ENCODE measurements at regions of chr5 and their contacts with region 1.

Region 1: GRCh38 chr5:176647030-176647866 is at the start of gene TSPAN17:
- DNase-seq: peak; percentile 91 to 100 (median 98)
- ATAC-seq: peak; percentile 90
- H3K4me3 ChIP-seq: peak within 1 kb of the TSS; percentile 71
- H3K4me3 Mint-ChIP-seq: peak within 1 kb of the TSS; percentile 93
- H3K27ac ChIP-seq: peak within 1 kb of the TSS; percentile 65 to 70
- H3K27ac Mint-ChIP-seq: peak within 1 kb of the TSS; percentile 76
- H3K4me1 ChIP-seq: peaks cover 52% of the 10 kb centered on the region
- H3K4me1 Mint-ChIP-seq: peaks cover 58% of the 10 kb centered on the region
- H3K27me3 ChIP-seq: no peaks in the 10 kb centered on the region
- H3K27me3 Mint-ChIP-seq: no peaks in the 10 kb centered on the region
- CTCF ChIP-seq: no peak
- total RNA-seq, gene TSPAN17: 7.8 to 7.9 TPM

Region 2: GRCh38 chr5:175814691-175815090 is 832.6 kb before region 1 on chr5:
- CTCF ChIA-PET with region 1: no interaction called
- POLR2A ChIA-PET with region 1: no interaction called
- intact Hi-C with region 1: no loop called
- DNase-seq: no peak
- ATAC-seq: no peak
- H3K4me3 ChIP-seq: no peak overlapping the region
- H3K4me3 Mint-ChIP-seq: no peak overlapping the region
- H3K27ac ChIP-seq: no peak overlapping the region
- H3K27ac Mint-ChIP-seq: no peak overlapping the region
- H3K4me1 ChIP-seq: no peaks in the 10 kb centered on the region
- H3K4me1 Mint-ChIP-seq: no peaks in the 10 kb centered on the region
- H3K27me3 ChIP-seq: peaks cover 0 to 2% of the 10 kb centered on the region in 2 experiments
- H3K27me3 Mint-ChIP-seq: peaks cover 27% of the 10 kb centered on the region
- CTCF ChIP-seq: no peak

Region 3: DNA sequence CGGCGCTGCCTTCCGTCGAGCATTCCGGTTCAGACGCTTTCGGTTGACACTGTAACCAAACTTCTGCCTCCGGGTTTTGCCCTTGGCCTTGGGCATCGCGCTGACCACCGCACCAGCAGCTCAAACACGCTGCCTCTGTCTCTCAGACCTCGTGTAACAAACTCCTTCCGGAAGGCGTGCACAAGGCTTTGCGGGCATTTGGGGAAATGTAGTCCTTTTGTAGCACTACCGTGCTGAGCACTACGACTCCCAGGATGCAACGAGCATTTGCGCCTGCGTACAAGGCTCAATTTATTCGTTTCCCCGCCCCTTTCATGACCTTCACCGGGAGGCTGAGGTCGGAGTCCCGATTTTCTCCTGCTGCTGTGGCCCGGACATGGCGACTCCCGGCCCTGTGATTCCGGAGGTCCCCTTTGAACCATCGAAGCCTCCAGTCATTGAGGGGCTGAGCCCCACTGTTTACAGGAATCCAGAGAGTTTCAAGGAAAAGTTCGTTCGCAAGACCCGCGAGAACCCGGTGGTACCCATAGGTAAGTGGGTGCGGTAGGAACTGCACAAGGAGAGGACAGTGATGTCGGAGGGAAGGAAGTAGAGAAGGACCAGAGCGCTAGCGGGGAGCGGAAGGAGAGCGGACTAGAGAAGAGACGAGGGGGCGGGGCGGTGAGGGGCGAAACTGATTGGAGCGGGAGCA is 258.7 kb before region 1 on chr5 and contains the starts of genes HIGD2A and NOP16:
- CTCF ChIA-PET with region 1: no interaction called
- POLR2A ChIA-PET with region 1: interaction called, 7 read pairs
- intact Hi-C with region 1: loop called in 1 of 2 experiments (anchors 2 kb)
- DNase-seq: peak; percentile 96 to 100 (median 99)
- ATAC-seq: peak; percentile 87
- H3K4me3 ChIP-seq: peak within 1 kb of the TSS; percentile 79
- H3K4me3 Mint-ChIP-seq: peak within 1 kb of the TSS; percentile 98
- H3K27ac ChIP-seq: peak within 1 kb of the TSS; percentile 87 to 95
- H3K27ac Mint-ChIP-seq: peak within 1 kb of the TSS; percentile 97
- H3K4me1 ChIP-seq: peaks cover 33% of the 10 kb centered on the region
- H3K4me1 Mint-ChIP-seq: peaks cover 38% of the 10 kb centered on the region
- H3K27me3 ChIP-seq: no peaks in the 10 kb centered on the region
- H3K27me3 Mint-ChIP-seq: no peaks in the 10 kb centered on the region
- CTCF ChIP-seq: no peak
- total RNA-seq, gene HIGD2A: 98.2 to 104 TPM
- total RNA-seq, gene NOP16: 12.0 to 14.5 TPM

Region 4: DNA sequence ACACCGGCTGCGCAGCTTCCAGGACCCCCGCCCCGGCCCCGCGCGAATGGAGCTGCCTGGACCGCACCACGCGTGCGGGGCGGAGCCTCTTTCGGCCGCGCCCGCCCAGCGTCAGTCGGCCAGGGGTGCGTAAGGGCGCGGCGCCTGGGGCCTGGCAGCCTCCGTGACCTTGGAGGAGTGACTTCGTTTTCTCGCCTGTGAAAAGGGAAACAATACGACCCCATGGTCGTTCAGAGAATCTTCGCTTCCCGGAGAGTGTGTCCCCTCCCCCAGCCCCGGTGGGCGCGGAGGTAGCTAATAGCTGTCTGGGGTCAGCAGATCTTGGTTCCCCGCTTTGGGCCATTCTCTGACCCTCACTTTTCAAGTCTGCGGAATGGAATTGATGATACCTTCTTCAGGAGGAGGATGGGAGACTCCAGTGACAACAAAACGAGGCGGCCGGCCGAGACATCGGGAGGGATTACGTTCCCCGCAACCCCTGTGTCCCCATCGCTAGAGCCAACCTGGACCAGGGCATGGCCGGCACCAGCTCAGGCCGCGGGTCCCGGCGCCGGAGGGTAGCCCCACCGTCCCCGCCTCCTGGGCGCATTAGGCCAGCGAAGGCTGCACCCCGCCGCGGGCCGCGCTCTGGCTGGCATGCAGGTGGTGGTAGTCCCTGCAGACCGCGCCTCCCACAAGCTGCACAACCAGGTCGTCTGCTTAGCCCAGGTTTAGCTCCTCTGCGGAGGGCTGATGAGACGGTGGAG is 103.6 kb before region 1 on chr5:
- CTCF ChIA-PET with region 1: no interaction called
- POLR2A ChIA-PET with region 1: interaction called, 9 read pairs
- intact Hi-C with region 1: loop called in 1 of 2 experiments (anchors 5 kb)
- DNase-seq: peak; percentile 53 to 89 (median 70)
- ATAC-seq: peak; percentile 64
- H3K4me3 ChIP-seq: peak overlapping the region; percentile 76
- H3K4me3 Mint-ChIP-seq: peak overlapping the region; percentile 89
- H3K27ac ChIP-seq: peak overlapping the region; percentile 84 to 87
- H3K27ac Mint-ChIP-seq: peak overlapping the region; percentile 93
- H3K4me1 ChIP-seq: peaks cover 77% of the 10 kb centered on the region
- H3K4me1 Mint-ChIP-seq: peaks cover 80% of the 10 kb centered on the region
- H3K27me3 ChIP-seq: no peaks in the 10 kb centered on the region
- H3K27me3 Mint-ChIP-seq: no peaks in the 10 kb centered on the region
- CTCF ChIP-seq: no peak

Region 5: DNA sequence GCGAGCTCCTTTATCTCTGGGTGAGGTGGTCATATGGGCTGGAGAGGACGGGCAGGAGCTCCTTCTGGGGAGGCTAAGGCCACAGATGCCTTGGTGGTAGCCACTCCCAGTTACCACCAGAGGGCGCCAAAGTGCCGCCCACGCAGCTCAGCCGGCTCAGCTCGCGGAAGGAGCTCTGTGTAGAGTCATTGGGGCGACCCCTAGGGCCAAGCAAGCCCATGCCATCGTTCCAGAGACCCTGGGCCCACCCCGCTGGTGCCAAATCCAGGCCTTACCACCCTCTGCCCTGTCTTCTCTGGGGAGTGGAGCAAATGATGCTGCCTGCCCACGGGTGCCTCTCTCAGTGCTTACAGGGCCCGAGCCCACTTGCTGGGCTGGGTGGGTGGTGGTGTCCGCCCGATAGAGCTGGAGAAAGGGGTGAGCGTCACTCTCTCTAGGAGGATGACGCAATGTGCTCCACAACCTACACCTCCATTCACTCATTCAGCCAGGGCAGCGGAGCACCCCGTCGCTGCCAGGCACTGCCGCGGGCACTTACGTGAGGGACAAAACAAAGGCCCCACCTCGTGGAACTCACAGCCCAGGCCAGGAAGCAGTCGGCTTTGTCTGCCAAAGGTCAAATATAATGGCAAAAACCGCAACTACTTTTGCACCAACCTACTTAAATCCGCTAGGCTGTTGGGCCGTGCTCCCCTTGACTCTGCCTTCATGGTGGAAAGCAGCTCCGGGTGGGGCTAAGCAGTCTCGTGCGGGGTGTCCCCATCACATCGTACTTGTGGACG is 13.8 kb after region 1 on chr5:
- CTCF ChIA-PET with region 1: interaction called, 43 read pairs
- POLR2A ChIA-PET with region 1: interaction called, 52 read pairs
- intact Hi-C with region 1: no loop called
- DNase-seq: peak; percentile 58 to 91 (median 73)
- ATAC-seq: peak; percentile 76
- H3K4me3 ChIP-seq: no peak overlapping the region
- H3K4me3 Mint-ChIP-seq: peak overlapping the region; percentile 83
- H3K27ac ChIP-seq: no peak overlapping the region
- H3K27ac Mint-ChIP-seq: peak overlapping the region; percentile 52
- H3K4me1 ChIP-seq: peaks cover 35% of the 10 kb centered on the region
- H3K4me1 Mint-ChIP-seq: peaks cover 33% of the 10 kb centered on the region
- H3K27me3 ChIP-seq: peaks cover 0 to 2% of the 10 kb centered on the region in 2 experiments
- H3K27me3 Mint-ChIP-seq: peaks cover 22% of the 10 kb centered on the region
- CTCF ChIP-seq: peak; percentile 97

Region 6: GRCh38 chr5:178204182-178204894 is 1557.1 kb after region 1 on chr5 and contains the start of gene HNRNPAB:
- CTCF ChIA-PET with region 1: no interaction called
- POLR2A ChIA-PET with region 1: no interaction called
- intact Hi-C with region 1: loop called in 1 of 2 experiments (anchors 10 kb)
- DNase-seq: peak; percentile 93 to 99 (median 97)
- ATAC-seq: peak; percentile 81
- H3K4me3 ChIP-seq: peak within 1 kb of the TSS; percentile 97
- H3K4me3 Mint-ChIP-seq: peak within 1 kb of the TSS; percentile 100
- H3K27ac ChIP-seq: peak within 1 kb of the TSS; percentile 29 to 62
- H3K27ac Mint-ChIP-seq: peak within 1 kb of the TSS; percentile 93
- H3K4me1 ChIP-seq: peaks cover 35% of the 10 kb centered on the region
- H3K4me1 Mint-ChIP-seq: peaks cover 40% of the 10 kb centered on the region
- H3K27me3 ChIP-seq: no peaks in the 10 kb centered on the region
- H3K27me3 Mint-ChIP-seq: peaks cover 4% of the 10 kb centered on the region
- CTCF ChIP-seq: no peak
- total RNA-seq, gene HNRNPAB: 63.6 to 68.9 TPM

Measured in CD4-positive, alpha-beta T cell (primary cell).